Heart left ventricle (tissue), 16 donors: ENCODE measurements at regions of chr15 and their contacts with region 1.

Region 1: GRCh38 chr15:38563723-38564519 is 693 bp downstream of the RASGRP1 start:
- DNase-seq: peak; percentile 49 to 86 (median 67)
- ATAC-seq: peak in 3 of 4 donors; percentile 85 to 95 (median 89)
- H3K4me3 ChIP-seq: peak overlapping the region; percentile 37 to 70 (median 56)
- H3K27ac ChIP-seq: peak overlapping the region in 3 of 12 donors; percentile 25 to 83 (median 26)
- H3K4me1 ChIP-seq: peaks cover 0 to 20% (median 5%) of the 10 kb centered on the region in 12 donors
- H3K27me3 ChIP-seq: peaks cover 0 to 25% (median 5%) of the 10 kb centered on the region in 9 donors
- CTCF ChIP-seq: peak; percentile 80 to 91 (median 86)
- POLR2A ChIP-seq: no peak

Region 2: GRCh38 chr15:38378161-38378560 is 185.8 kb before region 1 on chr15:
- intact Hi-C with region 1: no loop called
- DNase-seq: peak; percentile 76 to 84 (median 80)
- ATAC-seq: peak; percentile 47 to 86 (median 79)
- H3K4me3 ChIP-seq: peak overlapping the region in 1 of 12 donors; percentile 1
- H3K27ac ChIP-seq: peak overlapping the region in 11 of 12 donors; percentile 22 to 84 (median 59)
- H3K4me1 ChIP-seq: peaks cover 0 to 54% (median 41%) of the 10 kb centered on the region in 12 donors
- H3K27me3 ChIP-seq: no peaks in the 10 kb centered on the region
- CTCF ChIP-seq: no peak
- POLR2A ChIP-seq: no peak

Region 3: DNA sequence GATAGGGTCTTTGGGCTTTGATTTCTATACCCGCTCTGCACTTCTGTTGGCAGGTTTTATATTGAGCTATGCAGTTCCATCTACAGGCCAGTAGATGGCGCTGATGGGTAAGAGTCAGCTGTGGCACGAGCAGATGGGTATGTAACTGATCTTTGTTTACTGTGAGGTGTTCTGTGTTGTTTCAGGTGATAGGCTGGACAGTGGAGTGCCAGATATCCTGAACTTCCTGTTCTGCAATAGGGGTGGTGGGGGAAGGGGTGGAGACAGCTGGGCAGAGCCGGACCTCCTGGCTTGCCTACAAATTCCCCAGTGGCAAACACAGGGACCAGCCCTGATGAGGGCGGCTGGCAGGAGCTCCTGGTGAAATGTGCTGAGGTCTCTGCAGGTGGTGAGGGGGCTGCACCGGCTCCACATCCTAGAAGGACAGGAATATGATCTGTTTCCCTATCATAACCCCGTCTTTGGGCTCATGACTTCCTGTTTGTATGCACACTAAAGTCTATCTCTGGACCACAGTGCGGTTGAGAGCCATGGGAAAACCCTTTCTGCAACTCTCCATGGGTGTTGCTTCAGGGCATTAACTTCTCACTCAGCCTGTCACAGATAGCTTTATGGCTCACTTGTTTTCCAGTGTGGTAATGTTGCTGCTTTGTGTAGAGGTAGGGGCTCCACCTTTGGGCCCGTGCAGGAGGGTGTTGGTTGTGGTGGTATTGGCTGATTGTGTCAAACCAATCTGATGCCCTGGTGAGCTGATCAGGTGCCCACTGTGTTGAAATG is 123.4 kb before region 1 on chr15:
- intact Hi-C with region 1: loop called in 1 of 10 experiments (anchors 10 kb)
- DNase-seq: peak in 4 of 5 donors; percentile 16 to 30 (median 28)
- ATAC-seq: peak; percentile 55 to 82 (median 80)
- H3K4me3 ChIP-seq: no peak overlapping the region
- H3K27ac ChIP-seq: no peak overlapping the region
- H3K4me1 ChIP-seq: peaks cover 0 to 8% (median 0%) of the 10 kb centered on the region in 12 donors
- H3K27me3 ChIP-seq: peaks cover 0 to 8% (median 0%) of the 10 kb centered on the region in 9 donors
- CTCF ChIP-seq: peak; percentile 80 to 95 (median 92)
- POLR2A ChIP-seq: no peak

Region 4: DNA sequence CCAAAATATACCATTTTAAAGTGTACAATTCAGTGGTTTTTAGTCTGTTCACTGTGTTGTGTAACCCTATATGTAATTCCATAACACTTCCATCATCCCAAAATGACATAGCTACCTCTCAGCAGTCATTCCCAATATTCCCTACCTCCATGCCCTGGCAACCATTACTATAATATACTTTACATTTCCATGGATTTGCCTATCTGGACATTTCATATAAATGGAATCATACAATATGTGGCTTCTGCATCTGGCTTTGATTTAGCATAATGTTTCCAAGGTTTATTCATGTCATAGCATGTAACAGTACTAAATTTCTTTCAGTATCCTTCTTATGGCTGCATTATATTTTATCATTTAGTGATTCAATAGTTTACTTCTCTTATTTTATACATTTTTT is 84.7 kb before region 1 on chr15:
- intact Hi-C with region 1: loop called in 3 of 10 experiments (anchors 5 to 10 kb)
- DNase-seq: no peak
- ATAC-seq: no peak
- H3K4me3 ChIP-seq: no peak overlapping the region
- H3K27ac ChIP-seq: no peak overlapping the region
- H3K4me1 ChIP-seq: peaks cover 0 to 9% (median 0%) of the 10 kb centered on the region in 12 donors
- H3K27me3 ChIP-seq: no peaks in the 10 kb centered on the region
- CTCF ChIP-seq: no peak
- POLR2A ChIP-seq: no peak

Region 5: GRCh38 chr15:38624244-38625205 is 60.6 kb after region 1 on chr15:
- intact Hi-C with region 1: loop called in 8 of 10 experiments (anchors 2 to 5 kb)
- DNase-seq: no peak
- ATAC-seq: peak in 2 of 4 donors; percentile 23 to 61
- H3K4me3 ChIP-seq: no peak overlapping the region
- H3K27ac ChIP-seq: peak overlapping the region in 3 of 12 donors; percentile 9 to 50 (median 32)
- H3K4me1 ChIP-seq: peaks cover 0 to 27% (median 10%) of the 10 kb centered on the region in 12 donors
- H3K27me3 ChIP-seq: no peaks in the 10 kb centered on the region
- CTCF ChIP-seq: no peak
- POLR2A ChIP-seq: no peak

Region 6: DNA sequence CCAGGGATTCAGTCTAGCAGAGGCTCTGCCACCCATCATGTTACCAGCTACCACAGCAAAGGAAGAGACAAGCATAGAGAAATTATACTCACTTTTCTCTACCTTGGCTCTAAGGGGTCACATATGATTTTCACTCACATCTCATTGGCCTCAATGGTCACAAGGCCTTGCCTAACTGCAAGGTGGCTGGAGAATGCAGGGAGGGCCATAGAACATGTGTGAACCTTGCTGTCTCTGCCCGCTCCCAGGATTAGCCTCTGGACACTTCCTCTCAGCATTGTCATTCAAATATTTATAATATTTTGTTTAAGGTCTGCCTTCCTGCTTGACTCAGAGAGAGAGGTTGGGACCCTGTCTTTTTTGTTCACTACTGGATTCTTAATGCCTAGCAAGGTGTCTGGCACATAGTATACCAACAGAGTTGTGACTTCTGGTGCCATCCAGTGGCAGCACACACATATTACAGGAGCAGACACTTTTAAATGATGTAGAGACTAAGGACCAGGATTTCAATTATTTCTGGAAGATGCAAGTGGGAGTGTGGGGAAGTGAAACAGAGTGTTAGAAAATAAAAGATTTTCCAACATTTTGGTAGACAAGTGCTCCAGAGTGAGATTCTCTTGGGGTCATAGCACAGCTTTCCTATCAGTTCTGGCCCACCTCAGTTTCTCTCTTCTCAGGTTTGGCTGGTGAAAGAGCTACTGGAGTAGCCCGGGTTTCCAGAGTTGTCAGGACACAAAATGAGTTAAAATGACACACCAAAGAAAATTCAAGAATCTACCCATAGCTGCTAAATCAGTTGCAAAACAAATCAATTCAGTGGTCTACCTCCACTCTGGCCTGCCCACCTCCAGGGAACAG is 119.7 kb after region 1 on chr15:
- intact Hi-C with region 1: loop called (anchors 1 to 5 kb)
- DNase-seq: peak in 3 of 5 donors; percentile 35 to 48 (median 40)
- ATAC-seq: peak in 3 of 4 donors; percentile 74 to 81 (median 79)
- H3K4me3 ChIP-seq: no peak overlapping the region
- H3K27ac ChIP-seq: peak overlapping the region in 1 of 12 donors; percentile 57
- H3K4me1 ChIP-seq: peaks cover 0 to 45% (median 0%) of the 10 kb centered on the region in 12 donors
- H3K27me3 ChIP-seq: peaks cover 0 to 3% (median 0%) of the 10 kb centered on the region in 9 donors
- CTCF ChIP-seq: peak; percentile 66 to 78 (median 71)
- POLR2A ChIP-seq: no peak